Activated CD4-positive, alpha-beta memory T cell treated with anti-CD3 and anti-CD28 coated beads for 36 hours (primary cell): ENCODE measurements at regions of chr10 and their contacts with region 1.

Region 1: DNA sequence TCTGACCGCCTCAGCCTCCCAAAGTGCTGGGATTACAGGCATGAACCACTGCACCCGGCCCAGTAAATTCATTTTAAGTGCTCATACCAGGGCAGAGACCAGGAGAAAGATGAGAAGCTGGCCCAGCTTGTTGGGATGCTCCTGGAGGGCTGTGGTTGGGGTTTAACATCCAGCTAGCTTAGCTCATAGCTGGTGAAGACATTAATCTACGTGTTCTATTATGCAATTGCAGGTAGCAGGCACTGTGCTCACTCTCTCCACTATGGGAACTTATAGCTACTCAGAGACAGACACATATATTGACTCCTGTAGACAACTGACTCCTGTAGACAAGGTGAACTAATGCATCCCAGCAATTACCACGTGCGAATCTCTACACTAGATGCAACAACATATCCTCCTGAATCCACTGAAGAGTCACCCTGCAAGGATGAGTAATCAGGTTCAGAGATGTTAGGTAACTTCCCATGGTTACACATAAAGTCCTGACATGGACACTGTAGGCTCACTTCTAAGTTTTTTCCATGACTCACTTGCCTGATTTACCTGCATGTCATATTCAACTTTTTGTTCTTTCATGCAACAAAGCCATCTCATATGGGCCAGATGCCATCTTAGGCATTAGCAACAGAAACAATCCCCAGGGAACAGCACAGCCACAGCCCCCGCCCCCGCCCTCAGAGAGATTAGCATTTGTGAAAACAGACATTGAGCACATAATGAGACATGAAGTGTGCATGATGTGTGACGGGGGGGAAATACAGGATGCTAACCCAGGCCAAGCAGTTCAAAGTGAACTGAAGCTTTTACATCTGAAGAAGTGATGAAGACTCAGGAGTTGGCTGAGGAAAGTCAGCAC is 37.2 kb downstream of the ERLIN1 start:
- DNase-seq: peak; percentile 78
- H3K4me3 Mint-ChIP-seq: no peak overlapping the region
- H3K27ac Mint-ChIP-seq: peak overlapping the region; percentile 76
- H3K4me1 Mint-ChIP-seq: peaks cover 28% of the 10 kb centered on the region
- H3K27me3 Mint-ChIP-seq: peaks cover 3% of the 10 kb centered on the region

Region 2: GRCh38 chr10:99870123-99870730 is 278.4 kb before region 1 on chr10:
- CTCF ChIA-PET with region 1: no interaction called
- POLR2A ChIA-PET with region 1: no interaction called
- intact Hi-C with region 1: loop called (anchors 1 kb)
- DNase-seq: peak; percentile 74
- H3K4me3 Mint-ChIP-seq: peak overlapping the region; percentile 42
- H3K27ac Mint-ChIP-seq: no peak overlapping the region
- H3K4me1 Mint-ChIP-seq: peaks cover 26% of the 10 kb centered on the region
- H3K27me3 Mint-ChIP-seq: peaks cover 87% of the 10 kb centered on the region

Region 3: DNA sequence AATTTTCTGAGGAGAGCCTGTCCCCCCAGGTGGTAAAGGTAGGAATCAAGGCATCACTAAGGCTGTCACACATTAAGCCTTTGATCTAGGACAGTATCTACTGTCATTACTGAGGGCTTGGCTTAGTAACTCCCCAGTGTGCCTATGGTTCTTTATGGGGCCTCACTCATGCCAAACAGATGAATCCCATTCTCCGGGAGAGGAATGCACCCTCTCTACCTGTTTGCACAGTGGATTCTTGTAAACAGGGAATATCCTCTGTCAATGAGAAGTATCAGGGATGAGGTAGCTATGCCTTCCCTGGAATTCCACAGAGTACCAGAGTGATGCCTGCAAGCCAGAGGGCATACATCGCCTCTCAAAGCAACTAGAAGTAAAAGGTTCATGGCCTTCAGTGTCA is 63.0 kb before region 1 on chr10:
- CTCF ChIA-PET with region 1: no interaction called
- POLR2A ChIA-PET with region 1: no interaction called
- intact Hi-C with region 1: no loop called
- DNase-seq: no peak
- H3K4me3 Mint-ChIP-seq: no peak overlapping the region
- H3K27ac Mint-ChIP-seq: no peak overlapping the region
- H3K4me1 Mint-ChIP-seq: no peaks in the 10 kb centered on the region
- H3K27me3 Mint-ChIP-seq: peaks cover 17% of the 10 kb centered on the region

Region 4: DNA sequence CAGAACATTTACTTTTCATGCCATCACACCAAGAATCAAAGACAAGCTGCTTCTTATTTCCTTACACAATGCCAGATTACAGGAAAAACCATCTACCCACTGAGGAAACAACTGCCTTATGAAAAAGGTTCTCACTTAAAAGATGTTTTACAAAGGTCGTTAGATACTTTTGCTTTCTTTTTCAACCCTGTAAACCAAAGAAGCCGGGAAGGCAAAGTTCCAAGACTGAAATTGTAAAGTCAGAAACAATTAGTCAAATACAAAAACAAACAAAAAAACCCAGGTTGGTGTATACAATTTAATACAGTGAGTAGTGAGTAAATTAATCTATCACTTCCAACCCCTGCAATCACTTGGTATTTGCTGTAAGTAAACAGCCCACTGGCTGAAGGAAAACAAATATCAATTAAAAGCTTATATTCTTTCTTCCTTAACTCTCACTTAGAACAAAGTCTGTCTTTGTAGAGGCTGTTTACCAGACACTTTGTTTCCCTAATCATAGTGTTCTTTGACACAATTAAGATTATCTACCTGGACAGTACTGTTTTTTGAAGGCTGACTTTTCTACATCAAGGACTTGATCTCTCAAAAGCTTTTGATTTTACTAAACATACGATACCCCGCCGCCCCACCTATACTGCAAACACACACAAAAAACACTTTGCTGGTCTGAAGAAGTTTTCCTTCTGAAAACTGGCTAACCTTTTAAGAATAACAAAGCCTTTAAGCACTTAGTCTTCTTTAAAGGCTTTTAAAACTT is 19.2 kb after region 1 on chr10:
- CTCF ChIA-PET with region 1: no interaction called
- POLR2A ChIA-PET with region 1: interaction called, 3 read pairs
- intact Hi-C with region 1: loop called (anchors 1 kb)
- DNase-seq: no peak
- H3K4me3 Mint-ChIP-seq: peak overlapping the region; percentile 44
- H3K27ac Mint-ChIP-seq: peak overlapping the region; percentile 56
- H3K4me1 Mint-ChIP-seq: peaks cover 42% of the 10 kb centered on the region
- H3K27me3 Mint-ChIP-seq: no peaks in the 10 kb centered on the region

Region 5: DNA sequence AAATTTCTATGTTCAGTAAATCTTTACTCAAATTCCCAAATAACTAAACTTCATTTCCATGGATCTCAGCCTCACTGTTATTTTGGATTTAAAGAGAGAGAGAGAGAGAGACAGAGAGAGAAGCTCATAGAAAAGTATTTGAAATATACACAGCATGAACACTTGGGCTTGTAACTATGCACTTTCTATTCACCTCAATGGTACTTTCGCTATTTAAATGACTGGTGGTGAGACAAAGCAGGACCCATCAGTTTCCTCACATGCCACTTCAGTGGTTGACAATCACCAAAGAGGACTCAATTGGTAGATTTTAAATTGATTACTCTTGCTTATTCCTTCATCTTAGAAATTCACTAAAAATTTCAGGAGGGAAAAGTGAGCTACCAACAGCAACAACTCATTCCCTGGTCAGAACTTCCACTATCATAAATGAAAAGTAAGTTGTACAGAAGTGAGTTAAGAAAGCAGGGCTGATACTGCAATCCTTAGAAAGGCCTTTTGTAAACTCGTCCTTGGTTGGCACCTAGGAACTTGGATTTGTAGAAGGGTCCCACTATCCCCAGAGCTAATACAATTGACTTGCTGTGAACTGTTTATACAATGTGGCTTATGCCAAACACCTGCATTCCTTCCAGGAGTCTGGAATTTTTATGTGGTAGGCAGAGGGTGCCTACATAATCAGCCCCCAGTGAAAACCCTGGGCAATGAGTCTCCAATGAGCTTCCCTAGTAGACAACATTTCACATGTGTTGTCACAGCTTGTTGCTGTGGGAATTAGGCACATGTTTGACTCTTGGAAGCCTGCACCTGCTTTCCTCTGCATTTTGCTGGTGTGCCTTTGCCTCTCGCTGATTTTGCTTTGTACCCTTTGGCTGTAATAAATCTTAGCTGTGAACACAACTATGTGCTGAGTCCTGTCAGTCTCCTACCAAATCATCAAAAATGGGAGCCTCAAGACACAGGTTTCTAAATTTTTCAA is 26.4 kb after region 1 on chr10:
- CTCF ChIA-PET with region 1: interaction called, 3 read pairs
- POLR2A ChIA-PET with region 1: interaction called, 7 read pairs
- intact Hi-C with region 1: loop called (anchors 1 kb)
- DNase-seq: peak; percentile 34
- H3K4me3 Mint-ChIP-seq: peak overlapping the region; percentile 26
- H3K27ac Mint-ChIP-seq: peak overlapping the region; percentile 57
- H3K4me1 Mint-ChIP-seq: peaks cover 41% of the 10 kb centered on the region
- H3K27me3 Mint-ChIP-seq: no peaks in the 10 kb centered on the region

Region 6: DNA sequence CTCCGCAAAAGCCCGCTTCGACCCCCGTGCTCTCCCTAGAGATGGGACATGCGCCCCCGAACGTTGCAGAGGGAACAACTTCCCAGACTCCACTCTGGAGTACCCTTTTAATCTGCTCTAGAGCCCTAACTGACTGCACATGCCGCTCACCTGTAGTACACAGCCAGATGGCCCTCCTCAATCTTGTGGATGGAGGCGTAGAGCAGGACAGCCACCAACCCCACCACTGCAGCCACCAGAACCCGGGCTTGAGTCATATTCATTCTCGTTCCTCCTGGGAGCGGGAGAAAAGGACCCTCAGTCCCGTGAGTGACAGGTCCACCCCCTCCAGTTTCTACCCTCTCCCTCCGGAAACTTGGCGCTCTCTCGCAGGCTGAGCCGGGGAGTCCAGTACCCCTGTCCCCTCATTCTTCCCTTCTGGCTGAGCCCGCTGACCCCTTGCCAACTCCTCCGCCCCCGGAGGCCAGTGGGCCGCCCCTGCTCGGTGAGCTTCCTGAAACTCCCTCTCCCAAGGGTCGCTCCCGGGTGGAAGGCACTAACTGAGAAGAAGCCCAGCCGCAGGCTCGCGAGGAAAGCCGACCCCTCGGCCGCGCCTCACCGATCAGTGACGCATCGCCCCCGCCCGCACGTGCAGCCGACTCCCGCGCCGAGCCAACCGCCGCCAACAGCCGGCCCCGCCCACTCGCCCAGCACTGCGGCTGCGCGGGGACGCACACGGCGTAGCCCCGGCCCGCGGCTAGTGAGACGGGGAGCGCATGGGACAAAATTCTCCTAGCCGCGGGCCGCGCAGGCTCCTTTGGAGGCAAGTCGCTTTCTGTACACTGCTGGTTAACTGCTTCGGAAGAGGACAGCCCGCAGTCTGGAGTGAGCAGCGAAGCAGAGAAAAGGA is 37.0 kb after region 1 on chr10 and contains the start of gene ERLIN1:
- CTCF ChIA-PET with region 1: no interaction called
- POLR2A ChIA-PET with region 1: interaction called, 4 read pairs
- intact Hi-C with region 1: loop called (anchors 1 kb)
- DNase-seq: peak; percentile 96
- H3K4me3 Mint-ChIP-seq: peak within 1 kb of the TSS; percentile 90
- H3K27ac Mint-ChIP-seq: peak within 1 kb of the TSS; percentile 92
- H3K4me1 Mint-ChIP-seq: peaks cover 55% of the 10 kb centered on the region
- H3K27me3 Mint-ChIP-seq: no peaks in the 10 kb centered on the region
- total RNA-seq, gene ERLIN1: 15.4 to 16.8 TPM

Region 7: GRCh38 chr10:100229819-100230422 is 81.3 kb after region 1 on chr10:
- CTCF ChIA-PET with region 1: no interaction called
- POLR2A ChIA-PET with region 1: no interaction called
- intact Hi-C with region 1: loop called (anchors 1 kb)
- DNase-seq: no peak
- H3K4me3 Mint-ChIP-seq: peak overlapping the region; percentile 88
- H3K27ac Mint-ChIP-seq: peak overlapping the region; percentile 81
- H3K4me1 Mint-ChIP-seq: peaks cover 25% of the 10 kb centered on the region
- H3K27me3 Mint-ChIP-seq: no peaks in the 10 kb centered on the region